Common myeloid progenitor, CD34-positive (primary cell): ENCODE measurements at regions of chr20 and their contacts with region 1.

Region 1: DNA sequence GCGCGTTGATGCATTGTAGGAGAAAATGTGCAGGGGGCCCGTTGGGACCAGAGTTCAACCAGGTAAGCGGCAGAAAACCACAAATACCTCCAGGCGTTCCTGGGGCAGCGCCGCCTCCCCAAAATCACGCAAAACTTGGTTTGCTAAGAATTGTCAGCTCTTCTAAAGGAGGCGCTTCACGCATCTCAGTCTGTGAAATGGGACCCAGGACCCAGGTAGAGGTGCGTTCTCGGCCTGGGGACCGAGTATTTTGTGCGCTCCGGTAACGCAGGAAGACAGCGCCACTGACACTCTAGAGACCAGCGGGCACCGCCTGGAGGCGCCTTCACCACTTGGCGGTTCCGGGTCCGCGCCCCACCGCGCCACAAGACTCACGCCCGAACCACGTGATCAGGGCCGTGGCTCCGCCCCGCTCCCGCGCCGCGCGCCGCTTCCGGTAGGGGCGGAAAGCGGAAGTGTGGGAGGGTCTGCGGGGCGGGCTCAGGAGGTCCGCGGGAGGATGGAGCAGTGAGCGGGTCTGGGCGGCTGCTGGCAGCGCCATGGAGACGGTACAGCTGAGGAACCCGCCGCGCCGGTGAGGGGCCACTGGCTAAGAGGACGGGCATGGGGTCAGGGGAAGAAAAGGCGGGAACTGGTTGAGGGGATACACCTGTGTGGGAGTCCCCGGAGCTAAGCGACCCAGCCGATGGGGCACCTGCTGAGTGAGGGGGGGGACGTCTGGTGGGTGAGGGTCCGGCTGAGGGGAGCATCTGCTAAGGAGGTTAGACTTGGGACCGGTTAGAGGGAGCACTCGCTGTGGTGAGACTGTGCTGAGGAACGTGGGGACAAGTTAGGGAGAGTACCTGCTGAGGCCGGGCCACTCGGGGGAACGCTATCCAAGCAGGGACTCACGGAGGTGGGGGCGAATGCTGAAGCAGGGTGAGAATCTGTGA is at the start of gene STK4:
- DNase-seq: peak; percentile 96 to 98 (median 98)
- H3K4me3 ChIP-seq: peak within 1 kb of the TSS; percentile 74 to 98 (median 92)
- H3K27ac ChIP-seq: peak within 1 kb of the TSS; percentile 73 to 88
- H3K4me1 ChIP-seq: peaks cover 39 to 68% (median 48%) of the 10 kb centered on the region in 4 experiments
- H3K27me3 ChIP-seq: no peaks in the 10 kb centered on the region

Region 2: DNA sequence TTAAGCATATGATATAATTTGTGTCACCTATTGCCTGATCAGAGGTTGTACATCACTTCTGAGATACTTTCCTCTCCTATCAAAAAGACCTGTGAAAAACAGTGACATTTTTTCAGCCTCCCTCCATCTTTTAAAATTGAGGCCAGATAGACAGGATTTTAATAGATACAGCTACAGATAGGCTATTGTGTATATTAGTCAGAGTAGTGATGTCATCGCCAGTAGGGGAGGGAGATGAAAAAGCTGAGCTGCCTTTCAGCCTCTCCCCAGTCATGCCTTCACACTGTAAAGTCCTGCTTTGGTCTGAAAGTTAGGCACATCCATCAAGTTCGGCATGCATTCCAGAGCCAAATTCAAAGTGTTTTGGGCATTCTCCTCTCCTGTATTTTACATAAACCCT is 64.3 kb before region 1 on chr20:
- CTCF ChIA-PET with region 1: no interaction called
- POLR2A ChIA-PET with region 1: no interaction called
- DNase-seq: no peak
- H3K4me3 ChIP-seq: no peak overlapping the region
- H3K27ac ChIP-seq: no peak overlapping the region
- H3K4me1 ChIP-seq: peaks cover 0 to 20% (median 15%) of the 10 kb centered on the region in 4 experiments
- H3K27me3 ChIP-seq: no peaks in the 10 kb centered on the region

Region 3: GRCh38 chr20:44952736-44953135 is 13.6 kb before region 1 on chr20:
- CTCF ChIA-PET with region 1: interaction called, 10 read pairs
- POLR2A ChIA-PET with region 1: no interaction called
- DNase-seq: no peak
- H3K4me3 ChIP-seq: no peak overlapping the region
- H3K27ac ChIP-seq: no peak overlapping the region
- H3K4me1 ChIP-seq: no peaks in the 10 kb centered on the region
- H3K27me3 ChIP-seq: no peaks in the 10 kb centered on the region

Region 4: GRCh38 chr20:44979090-44979621 is 12.9 kb after region 1 on chr20:
- CTCF ChIA-PET with region 1: interaction called, 20 read pairs
- POLR2A ChIA-PET with region 1: interaction called, 3 read pairs
- DNase-seq: peak; percentile 93 to 97 (median 96)
- H3K4me3 ChIP-seq: peak overlapping the region in 5 of 7 experiments; percentile 2 to 51 (median 43)
- H3K27ac ChIP-seq: peak overlapping the region; percentile 89 to 94
- H3K4me1 ChIP-seq: peaks cover 21 to 39% (median 29%) of the 10 kb centered on the region in 4 experiments
- H3K27me3 ChIP-seq: no peaks in the 10 kb centered on the region

Region 5: GRCh38 chr20:45052698-45053429 is 86.6 kb after region 1 on chr20:
- CTCF ChIA-PET with region 1: no interaction called
- POLR2A ChIA-PET with region 1: no interaction called
- DNase-seq: peak in 2 of 3 donors; percentile 38 to 53
- H3K4me3 ChIP-seq: peak overlapping the region in 1 of 7 experiments; percentile 7
- H3K27ac ChIP-seq: peak overlapping the region; percentile 2 to 60
- H3K4me1 ChIP-seq: peaks cover 7 to 39% (median 23%) of the 10 kb centered on the region in 4 experiments
- H3K27me3 ChIP-seq: no peaks in the 10 kb centered on the region